Endothelial cell of umbilical vein (primary cell): ENCODE measurements at regions of chr6 and their contacts with region 1.

Region 1: DNA sequence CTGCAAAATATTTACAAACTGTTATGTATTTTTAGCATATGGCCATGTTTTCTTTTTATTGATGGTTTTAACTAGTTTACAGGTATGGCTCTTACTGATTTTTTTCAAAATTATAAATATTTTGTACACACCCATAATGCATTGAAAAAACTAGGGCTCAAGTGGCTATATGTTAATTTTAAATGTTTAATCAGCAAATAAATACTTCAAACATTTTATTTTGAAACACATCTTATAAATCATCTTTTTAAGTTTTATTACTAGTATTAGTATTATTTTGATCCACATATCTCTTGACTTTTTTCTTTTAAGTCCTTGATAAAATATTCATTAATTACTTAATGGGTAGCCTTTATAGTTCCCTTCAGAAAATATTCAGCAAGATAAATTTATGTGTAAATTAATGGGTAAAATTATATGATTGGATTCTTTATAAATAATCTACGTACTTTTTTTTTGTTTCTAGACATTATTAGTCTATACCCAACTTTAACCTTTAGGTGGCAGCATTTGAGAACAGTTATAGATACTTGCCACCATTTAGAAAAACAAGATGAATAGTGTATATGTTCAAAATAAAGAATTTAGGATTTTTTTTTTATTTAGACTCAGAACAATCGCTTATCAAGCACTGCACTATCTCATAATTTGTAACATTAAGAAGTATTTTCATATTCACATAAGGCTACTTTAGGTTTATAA is 241.9 kb downstream of the ADGRB3 start:
- DNase-seq: no peak
- H3K4me3 ChIP-seq: no peak overlapping the region
- H3K27ac ChIP-seq: no peak overlapping the region
- H3K4me1 ChIP-seq: no peaks in the 10 kb centered on the region
- H3K27me3 ChIP-seq: no peaks in the 10 kb centered on the region
- CTCF ChIP-seq: no peak
- POLR2A ChIP-seq: no peak

Region 2: DNA sequence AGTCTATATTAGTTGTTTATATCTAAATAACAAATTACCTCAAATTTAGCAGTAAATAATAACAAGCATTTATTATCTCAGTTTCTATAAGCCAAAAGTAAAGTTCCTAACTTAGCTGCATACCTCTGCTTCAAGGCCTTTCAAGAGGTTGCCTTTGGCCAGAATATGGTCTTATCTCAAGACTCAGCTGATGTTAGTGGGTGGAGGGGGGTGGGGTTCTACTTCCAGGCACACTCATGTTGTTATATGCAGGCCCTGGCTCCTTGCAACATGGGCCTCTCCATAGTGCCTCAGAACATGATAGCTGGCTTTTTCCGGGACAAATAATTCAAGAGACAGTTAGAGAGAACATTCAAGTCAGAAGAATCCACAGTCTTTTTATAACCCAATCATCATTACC is 24.1 kb after region 1 on chr6:
- CTCF ChIA-PET with region 1: no interaction called
- POLR2A ChIA-PET with region 1: no interaction called
- dilution Hi-C with region 1: no loop called
- intact Hi-C with region 1: no loop called
- DNase-seq: no peak
- H3K4me3 ChIP-seq: no peak overlapping the region
- H3K27ac ChIP-seq: no peak overlapping the region
- H3K4me1 ChIP-seq: no peaks in the 10 kb centered on the region
- H3K27me3 ChIP-seq: no peaks in the 10 kb centered on the region
- CTCF ChIP-seq: no peak
- POLR2A ChIP-seq: no peak

Region 3: GRCh38 chr6:68941345-68941744 is 64.4 kb after region 1 on chr6:
- CTCF ChIA-PET with region 1: no interaction called
- POLR2A ChIA-PET with region 1: no interaction called
- dilution Hi-C with region 1: no loop called
- intact Hi-C with region 1: no loop called
- DNase-seq: no peak
- H3K4me3 ChIP-seq: no peak overlapping the region
- H3K27ac ChIP-seq: no peak overlapping the region
- H3K4me1 ChIP-seq: no peaks in the 10 kb centered on the region
- H3K27me3 ChIP-seq: no peaks in the 10 kb centered on the region
- CTCF ChIP-seq: no peak
- POLR2A ChIP-seq: no peak

Region 4: GRCh38 chr6:69155467-69155866 is 278.5 kb after region 1 on chr6:
- CTCF ChIA-PET with region 1: no interaction called
- POLR2A ChIA-PET with region 1: no interaction called
- dilution Hi-C with region 1: no loop called
- intact Hi-C with region 1: loop called (anchors 10 kb)
- DNase-seq: no peak
- H3K4me3 ChIP-seq: no peak overlapping the region
- H3K27ac ChIP-seq: no peak overlapping the region
- H3K4me1 ChIP-seq: no peaks in the 10 kb centered on the region
- H3K27me3 ChIP-seq: no peaks in the 10 kb centered on the region
- CTCF ChIP-seq: no peak
- POLR2A ChIP-seq: no peak

Region 5: GRCh38 chr6:69719602-69720193 is 842.8 kb after region 1 on chr6:
- CTCF ChIA-PET with region 1: no interaction called
- POLR2A ChIA-PET with region 1: no interaction called
- dilution Hi-C with region 1: no loop called
- intact Hi-C with region 1: loop called (anchors 5 kb)
- DNase-seq: peak; percentile 46
- H3K4me3 ChIP-seq: no peak overlapping the region
- H3K27ac ChIP-seq: no peak overlapping the region
- H3K4me1 ChIP-seq: no peaks in the 10 kb centered on the region
- H3K27me3 ChIP-seq: no peaks in the 10 kb centered on the region
- CTCF ChIP-seq: peak in 1 of 2 donors; percentile 8
- POLR2A ChIP-seq: no peak

Region 6: DNA sequence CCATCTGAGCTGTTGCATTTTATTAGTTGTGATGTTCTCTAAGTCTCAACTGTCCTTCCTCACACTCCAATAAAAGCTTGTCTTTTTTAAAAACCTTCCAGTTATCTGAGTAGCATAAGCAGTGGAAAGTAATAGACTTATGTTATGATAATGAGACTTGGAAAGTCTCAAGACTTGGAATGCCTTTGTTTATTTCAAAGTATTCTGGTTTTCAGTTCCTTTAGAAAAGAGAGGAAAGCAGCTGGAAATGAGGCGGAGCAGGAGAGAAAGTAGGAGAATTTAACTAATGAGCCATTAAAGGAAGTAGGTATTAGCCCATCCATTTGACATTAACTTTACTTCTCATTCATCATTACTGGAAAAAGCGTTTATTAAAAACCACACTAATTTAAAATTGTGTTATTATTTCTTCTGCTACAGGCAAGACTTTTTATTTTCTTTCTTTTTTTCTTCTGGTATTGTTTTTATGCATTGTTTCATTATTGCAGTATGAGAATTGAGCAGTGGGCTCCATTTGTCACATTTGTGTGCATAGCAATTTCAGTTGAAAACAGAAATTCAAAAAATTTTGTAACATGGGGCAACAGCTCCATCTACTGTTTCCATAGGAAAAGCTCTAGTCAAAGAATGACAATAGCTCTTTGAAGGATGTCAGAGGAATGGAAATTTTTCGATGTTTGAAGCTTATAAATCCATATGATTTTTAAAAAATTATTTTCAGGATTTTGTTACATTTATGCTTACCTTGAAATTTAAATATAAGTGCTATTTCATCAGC is 1231.1 kb after region 1 on chr6:
- CTCF ChIA-PET with region 1: no interaction called
- POLR2A ChIA-PET with region 1: no interaction called
- dilution Hi-C with region 1: no loop called
- intact Hi-C with region 1: loop called (anchors 1 kb)
- DNase-seq: peak; percentile 26
- H3K4me3 ChIP-seq: no peak overlapping the region
- H3K27ac ChIP-seq: no peak overlapping the region
- H3K4me1 ChIP-seq: no peaks in the 10 kb centered on the region
- H3K27me3 ChIP-seq: no peaks in the 10 kb centered on the region
- CTCF ChIP-seq: peak; percentile 33 to 35
- POLR2A ChIP-seq: no peak